ENCODE measurements at regions of chr9 and their contacts with region 1.

Region 1: GRCh38 chr9:128643519-128644300 is 12.9 kb downstream of the DYNC2I2 start:
- DNase-seq: peak; percentile 44
- ATAC-seq: peak; percentile 84
- H3K4me3 Mint-ChIP-seq: peak overlapping the region; percentile 45
- H3K27ac Mint-ChIP-seq: peak overlapping the region; percentile 84
- H3K4me1 Mint-ChIP-seq: peaks cover 23% of the 10 kb centered on the region
- H3K27me3 Mint-ChIP-seq: no peaks in the 10 kb centered on the region
- CTCF ChIP-seq: no peak

Region 2: DNA sequence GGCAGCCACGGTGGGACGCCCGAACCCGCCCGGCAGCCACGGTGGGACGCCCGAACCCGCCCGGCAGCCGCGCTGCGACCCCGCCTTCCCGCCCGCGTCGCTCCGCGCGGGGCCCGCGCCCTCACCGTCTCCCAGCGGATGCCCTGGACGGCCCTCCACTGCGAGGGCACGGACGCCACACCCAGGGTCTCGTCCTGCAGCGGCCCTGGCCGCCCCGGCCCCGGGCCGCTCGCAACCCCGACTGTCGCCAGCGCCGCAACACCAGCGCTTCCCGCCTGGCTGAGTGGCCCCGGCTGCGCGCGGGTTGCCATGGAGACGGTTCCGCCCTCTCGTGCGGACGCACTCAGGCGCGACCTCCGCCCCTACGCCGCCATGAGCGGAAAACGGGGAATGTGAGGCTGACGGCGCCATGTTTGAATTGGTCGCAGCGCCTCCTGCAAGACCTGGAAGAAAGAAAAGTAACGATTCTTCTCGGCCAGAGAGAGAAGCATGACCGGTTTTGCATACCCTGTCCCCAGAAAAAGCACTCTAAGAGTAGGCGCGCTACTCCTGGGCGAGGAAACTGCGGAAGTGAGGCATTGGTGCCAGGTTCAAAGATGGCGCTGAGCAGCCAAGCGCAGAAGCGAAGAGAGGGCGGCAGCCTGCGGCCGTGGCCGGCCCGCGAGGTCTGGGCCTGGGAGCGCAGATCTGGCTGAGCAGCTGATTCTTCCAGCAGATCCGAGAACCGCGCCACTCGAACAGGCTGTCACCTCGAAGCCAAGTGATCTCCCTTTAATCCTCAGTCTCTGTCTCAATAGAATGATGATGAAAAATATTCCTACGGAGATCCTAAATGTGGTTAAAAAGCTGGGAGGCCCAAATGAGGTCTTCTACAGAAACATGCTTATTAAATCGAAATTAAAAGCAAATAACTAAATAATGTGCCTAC is 13.0 kb after region 1 on chr9 and contains the start of gene DYNC2I2:
- CTCF ChIA-PET with region 1: no interaction called
- POLR2A ChIA-PET with region 1: interaction called, 21 read pairs
- intact Hi-C with region 1: loop called (anchors 1 kb)
- DNase-seq: peak; percentile 80
- ATAC-seq: peak; percentile 73
- H3K4me3 Mint-ChIP-seq: peak within 1 kb of the TSS; percentile 92
- H3K27ac Mint-ChIP-seq: peak within 1 kb of the TSS; percentile 99
- H3K4me1 Mint-ChIP-seq: peaks cover 18% of the 10 kb centered on the region
- H3K27me3 Mint-ChIP-seq: no peaks in the 10 kb centered on the region
- CTCF ChIP-seq: no peak
- total RNA-seq, gene DYNC2I2: 58.0 and 60.2 TPM in 2 replicates

Region 3: DNA sequence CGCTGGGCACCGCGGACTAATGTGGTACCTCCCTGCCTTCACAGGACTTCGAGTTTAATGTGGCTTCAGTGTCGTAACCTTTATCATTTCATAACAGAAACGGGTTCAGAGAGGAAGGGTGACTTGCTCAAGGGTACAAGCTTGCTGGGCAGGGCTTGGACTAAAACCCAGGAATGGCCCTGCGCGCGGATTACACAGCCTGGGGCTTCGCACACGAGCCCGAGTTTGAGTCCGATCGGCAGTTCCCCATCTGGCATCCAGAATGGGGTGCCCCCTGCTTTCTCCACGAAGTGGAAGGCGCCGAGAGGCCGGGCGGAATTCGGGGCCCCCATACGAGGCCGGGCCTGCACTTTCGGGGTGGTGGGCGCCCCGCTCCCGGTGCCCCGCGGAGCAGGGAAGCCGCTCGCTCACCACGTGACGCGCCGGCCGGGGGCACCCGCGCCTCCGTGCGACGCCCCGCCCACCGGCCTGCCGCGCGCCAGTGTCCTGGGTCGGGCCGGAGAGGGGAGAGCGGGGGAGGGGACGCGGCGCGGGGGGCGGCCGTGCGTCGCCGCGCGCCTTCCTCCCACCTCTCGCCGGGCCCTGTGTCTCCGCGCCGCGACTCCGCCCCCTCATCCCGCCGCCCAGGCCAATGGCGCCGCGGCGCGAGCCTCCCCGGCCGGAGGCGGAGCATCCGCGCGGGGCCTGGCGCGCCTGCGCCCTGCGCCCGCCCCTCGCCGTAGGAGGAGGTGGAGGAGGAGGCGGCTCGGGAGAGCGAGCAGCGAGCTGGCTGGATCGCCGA is 45.0 kb after region 1 on chr9 and contains the start of gene SET:
- CTCF ChIA-PET with region 1: interaction called, 3 read pairs
- POLR2A ChIA-PET with region 1: interaction called, 17 read pairs
- intact Hi-C with region 1: loop called (anchors 1 kb)
- DNase-seq: peak; percentile 97
- ATAC-seq: peak; percentile 81
- H3K4me3 Mint-ChIP-seq: peak within 1 kb of the TSS; percentile 98
- H3K27ac Mint-ChIP-seq: peak within 1 kb of the TSS; percentile 87
- H3K4me1 Mint-ChIP-seq: peaks cover 68% of the 10 kb centered on the region
- H3K27me3 Mint-ChIP-seq: no peaks in the 10 kb centered on the region
- CTCF ChIP-seq: no peak
- total RNA-seq, gene SET: 762 and 801 TPM in 2 replicates

Region 4: GRCh38 chr9:128771745-128772519 is 128.2 kb after region 1 on chr9 and contains the start of gene ZER1:
- CTCF ChIA-PET with region 1: no interaction called
- POLR2A ChIA-PET with region 1: interaction called, 3 read pairs
- intact Hi-C with region 1: loop called (anchors 2 kb)
- DNase-seq: peak; percentile 96
- ATAC-seq: peak; percentile 93
- H3K4me3 Mint-ChIP-seq: peak within 1 kb of the TSS; percentile 92
- H3K27ac Mint-ChIP-seq: peak within 1 kb of the TSS; percentile 89
- H3K4me1 Mint-ChIP-seq: peaks cover 24% of the 10 kb centered on the region
- H3K27me3 Mint-ChIP-seq: no peaks in the 10 kb centered on the region
- CTCF ChIP-seq: no peak
- total RNA-seq, gene ZER1: 24.0 and 26.0 TPM in 2 replicates

Region 5: DNA sequence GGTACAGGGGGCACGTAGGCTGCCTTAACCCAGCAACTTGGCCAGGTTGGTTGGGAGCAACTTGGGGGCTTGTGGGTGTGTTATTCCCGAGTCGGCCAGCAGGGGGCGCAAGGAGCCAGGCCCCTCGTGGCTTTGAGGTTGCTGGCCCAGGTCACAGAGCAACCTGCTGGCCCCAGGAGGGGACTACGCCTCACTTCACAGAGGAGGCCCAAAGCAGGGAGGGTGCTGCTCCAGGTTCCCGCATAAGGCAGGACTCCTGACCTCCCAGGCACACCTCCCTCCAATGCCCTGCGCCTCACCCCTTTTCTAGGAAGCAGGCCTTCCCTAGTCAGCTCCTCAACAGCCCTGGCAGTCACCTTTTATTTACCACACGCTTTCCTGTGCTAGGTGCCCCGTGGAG is 219.9 kb after region 1 on chr9:
- CTCF ChIA-PET with region 1: no interaction called
- POLR2A ChIA-PET with region 1: no interaction called
- intact Hi-C with region 1: loop called (anchors 2 kb)
- DNase-seq: peak; percentile 80
- ATAC-seq: peak; percentile 99
- H3K4me3 Mint-ChIP-seq: no peak overlapping the region
- H3K27ac Mint-ChIP-seq: no peak overlapping the region
- H3K4me1 Mint-ChIP-seq: peaks cover 6% of the 10 kb centered on the region
- H3K27me3 Mint-ChIP-seq: no peaks in the 10 kb centered on the region
- CTCF ChIP-seq: peak; percentile 60

Region 6: GRCh38 chr9:128927731-128928411 is 284.2 kb after region 1 on chr9:
- CTCF ChIA-PET with region 1: interaction called, 7 read pairs
- POLR2A ChIA-PET with region 1: no interaction called
- intact Hi-C with region 1: loop called (anchors 2 kb)
- DNase-seq: peak; percentile 30
- ATAC-seq: peak; percentile 86
- H3K4me3 Mint-ChIP-seq: no peak overlapping the region
- H3K27ac Mint-ChIP-seq: no peak overlapping the region
- H3K4me1 Mint-ChIP-seq: peaks cover 5% of the 10 kb centered on the region
- H3K27me3 Mint-ChIP-seq: no peaks in the 10 kb centered on the region
- CTCF ChIP-seq: peak; percentile 90

Region 7: DNA sequence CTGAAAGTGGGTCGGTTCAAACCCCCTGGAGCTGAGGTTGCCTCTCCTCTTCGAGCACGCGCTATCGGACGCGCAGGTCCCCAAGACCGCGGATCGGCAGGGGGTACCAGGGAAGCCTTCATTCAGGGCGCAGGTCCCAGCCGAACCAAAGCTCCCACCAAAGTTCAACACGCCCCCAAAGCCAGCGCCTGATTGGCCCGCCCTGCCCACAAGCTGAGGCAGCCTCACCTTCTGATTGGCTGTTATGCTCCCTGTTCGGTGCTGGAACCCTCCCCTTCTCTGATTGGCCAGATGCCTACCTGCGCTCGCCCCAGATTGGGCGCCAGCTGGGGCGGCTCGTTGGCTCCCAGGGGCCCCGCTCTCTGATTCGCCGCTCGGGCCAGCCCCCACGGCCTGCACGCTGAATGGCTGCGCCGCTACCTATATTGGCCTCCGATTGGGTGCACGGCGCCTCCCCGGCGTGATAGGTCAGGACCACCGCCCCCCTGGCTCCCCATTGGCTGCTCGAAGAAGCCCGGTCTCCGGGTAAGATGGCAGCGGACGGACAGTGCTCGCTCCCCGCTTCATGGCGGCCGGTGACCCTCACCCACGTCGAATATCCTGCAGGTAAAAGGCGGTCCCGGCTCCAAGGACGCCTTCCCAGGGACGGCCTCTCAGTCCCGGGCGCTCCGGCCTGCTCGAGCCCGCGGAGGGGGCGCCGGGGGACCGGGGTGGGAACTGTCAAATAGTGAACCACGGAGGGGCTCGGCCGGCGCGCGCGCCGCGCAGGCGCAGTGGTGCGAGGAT is 437.1 kb after region 1 on chr9 and contains the start of gene DOLPP1:
- CTCF ChIA-PET with region 1: no interaction called
- POLR2A ChIA-PET with region 1: interaction called, 12 read pairs
- intact Hi-C with region 1: no loop called
- DNase-seq: peak; percentile 97
- ATAC-seq: peak; percentile 95
- H3K4me3 Mint-ChIP-seq: peak within 1 kb of the TSS; percentile 87
- H3K27ac Mint-ChIP-seq: peak within 1 kb of the TSS; percentile 76
- H3K4me1 Mint-ChIP-seq: peaks cover 29% of the 10 kb centered on the region
- H3K27me3 Mint-ChIP-seq: no peaks in the 10 kb centered on the region
- CTCF ChIP-seq: no peak
- total RNA-seq, gene DOLPP1: 10.9 and 11.3 TPM in 2 replicates

Measured in activated B cell treated with CpG ODN at 0.5 μM for 24 hours (primary cell).